Endothelial cell of umbilical vein (primary cell): ENCODE measurements at regions of chr1 and their contacts with region 1.

Region 1: DNA sequence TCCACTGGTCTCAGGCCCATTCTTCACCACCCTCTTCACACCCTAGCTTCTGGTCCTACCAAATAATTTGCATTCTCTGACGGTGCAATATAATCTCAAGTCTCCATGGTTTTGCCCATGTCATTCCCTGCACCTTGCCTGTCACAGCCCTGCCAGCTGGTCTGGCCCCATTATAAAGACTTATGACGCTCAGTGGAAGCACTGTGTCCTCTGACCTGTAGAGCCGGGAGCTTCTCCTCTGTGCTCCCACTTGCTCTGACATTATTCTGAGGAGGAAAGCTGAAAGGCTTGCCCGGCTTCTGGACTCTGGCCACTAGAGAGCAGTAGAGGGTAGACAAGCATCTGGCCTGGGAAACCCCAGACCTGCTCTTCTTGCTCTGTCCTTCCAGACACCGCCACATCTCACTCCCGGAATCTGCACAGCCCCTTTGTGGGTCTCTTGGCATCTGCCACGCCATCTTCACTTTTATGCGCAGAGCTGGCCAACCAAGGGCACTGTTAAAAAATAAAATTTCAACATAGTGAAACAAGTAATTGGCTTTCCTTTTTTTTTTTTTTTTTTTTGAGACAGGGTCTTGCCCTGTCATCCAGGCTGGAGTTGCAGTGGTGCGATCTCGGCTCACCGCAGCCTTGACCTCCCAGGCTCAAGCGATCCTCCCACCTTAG is 44.4 kb downstream of the NENF start:
- DNase-seq: peak; percentile 83
- H3K4me3 ChIP-seq: no peak overlapping the region
- H3K27ac ChIP-seq: no peak overlapping the region
- H3K4me1 ChIP-seq: peaks cover 13% of the 10 kb centered on the region
- H3K27me3 ChIP-seq: peaks cover 0 to 8% of the 10 kb centered on the region in 2 experiments
- CTCF ChIP-seq: peak; percentile 86 to 93
- POLR2A ChIP-seq: no peak

Region 2: DNA sequence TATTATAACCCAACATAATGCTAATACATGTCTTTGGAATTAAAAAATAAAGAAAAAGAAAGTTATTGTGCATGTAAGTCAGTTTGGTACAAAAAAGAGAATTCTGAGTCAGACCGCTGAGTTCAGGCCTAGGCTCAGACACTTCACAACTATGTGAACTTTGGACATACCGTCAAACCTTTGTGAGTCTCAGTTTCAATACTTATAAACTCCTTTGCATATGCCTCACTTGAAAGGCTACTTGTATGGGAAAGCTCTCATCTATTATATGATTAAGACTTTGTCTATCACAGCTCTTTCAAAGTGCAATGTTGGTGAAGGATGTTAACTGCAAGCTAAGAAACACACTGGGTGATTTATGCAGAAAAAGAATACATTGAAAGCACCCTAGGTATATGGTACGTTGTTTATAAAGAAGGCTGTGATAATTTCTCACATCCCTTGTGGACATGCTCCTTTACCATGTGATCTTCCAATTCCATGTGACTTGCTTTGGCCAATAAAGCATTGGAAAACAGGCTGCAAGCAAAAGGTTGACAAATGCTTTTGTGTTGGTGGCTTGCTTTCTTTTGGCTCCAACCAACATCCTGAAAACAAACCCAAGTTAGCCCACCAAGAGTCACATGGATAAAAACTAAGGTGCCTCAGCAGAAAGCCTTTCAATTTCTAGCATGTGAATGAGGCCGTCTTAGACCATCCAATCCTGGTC is 491.4 kb before region 1 on chr1:
- CTCF ChIA-PET with region 1: no interaction called
- POLR2A ChIA-PET with region 1: no interaction called
- dilution Hi-C with region 1: no loop called
- intact Hi-C with region 1: no loop called
- DNase-seq: no peak
- H3K4me3 ChIP-seq: no peak overlapping the region
- H3K27ac ChIP-seq: no peak overlapping the region
- H3K4me1 ChIP-seq: no peaks in the 10 kb centered on the region
- H3K27me3 ChIP-seq: no peaks in the 10 kb centered on the region
- CTCF ChIP-seq: no peak
- POLR2A ChIP-seq: no peak

Region 3: GRCh38 chr1:212271823-212272485 is 205.2 kb before region 1 on chr1:
- CTCF ChIA-PET with region 1: no interaction called
- POLR2A ChIA-PET with region 1: no interaction called
- dilution Hi-C with region 1: no loop called
- intact Hi-C with region 1: no loop called
- DNase-seq: no peak
- H3K4me3 ChIP-seq: no peak overlapping the region
- H3K27ac ChIP-seq: no peak overlapping the region
- H3K4me1 ChIP-seq: no peaks in the 10 kb centered on the region
- H3K27me3 ChIP-seq: peaks cover 24 to 30% of the 10 kb centered on the region in 2 experiments
- CTCF ChIP-seq: no peak
- POLR2A ChIP-seq: no peak

Region 4: GRCh38 chr1:212488397-212489283 is 11.5 kb after region 1 on chr1:
- CTCF ChIA-PET with region 1: interaction called, 20 read pairs
- POLR2A ChIA-PET with region 1: no interaction called
- dilution Hi-C with region 1: no loop called
- intact Hi-C with region 1: no loop called
- DNase-seq: no peak
- H3K4me3 ChIP-seq: no peak overlapping the region
- H3K27ac ChIP-seq: no peak overlapping the region
- H3K4me1 ChIP-seq: no peaks in the 10 kb centered on the region
- H3K27me3 ChIP-seq: peaks cover 0 to 2% of the 10 kb centered on the region in 2 experiments
- CTCF ChIP-seq: no peak
- POLR2A ChIP-seq: no peak

Region 5: DNA sequence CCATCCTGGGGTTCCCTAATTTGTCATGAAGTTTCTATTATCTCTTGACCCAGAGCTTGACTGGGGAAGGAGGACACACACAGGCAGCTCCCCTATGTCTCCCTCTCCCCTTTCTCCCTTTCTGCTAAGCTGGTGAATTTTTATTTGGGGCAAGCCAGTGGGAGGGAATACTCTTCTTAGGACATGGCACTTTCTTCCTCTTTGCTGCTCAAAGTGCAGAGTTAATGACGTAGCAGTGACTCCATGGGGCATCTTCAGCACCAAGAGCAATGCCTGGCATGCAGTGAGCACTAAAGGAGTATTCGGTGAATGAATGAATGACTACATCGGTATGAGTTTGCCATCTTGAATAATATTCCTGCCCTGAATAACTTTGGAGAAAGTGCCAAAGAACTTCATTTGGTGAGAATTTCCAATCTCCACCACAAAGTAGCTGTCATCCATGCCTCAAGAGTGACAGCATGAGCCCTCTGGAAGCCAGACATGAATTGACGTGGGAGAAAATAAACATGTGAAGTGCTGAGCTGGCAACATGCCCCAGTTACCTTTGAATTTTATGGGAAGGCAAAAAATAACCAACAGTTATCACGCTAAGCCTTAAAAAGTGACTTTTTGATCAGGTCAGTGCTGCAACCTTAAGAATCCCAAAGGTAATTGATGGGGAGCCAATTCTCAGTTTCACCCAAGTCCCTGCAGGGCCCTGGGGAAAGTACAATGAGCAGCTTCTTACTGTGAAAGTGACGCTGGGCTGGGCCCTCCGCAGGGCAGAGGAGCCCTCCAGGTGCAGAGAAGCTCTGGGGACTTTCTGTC is 109.3 kb after region 1 on chr1:
- CTCF ChIA-PET with region 1: interaction called, 11 read pairs
- POLR2A ChIA-PET with region 1: interaction called, 4 read pairs
- dilution Hi-C with region 1: no loop called
- intact Hi-C with region 1: no loop called
- DNase-seq: no peak
- H3K4me3 ChIP-seq: no peak overlapping the region
- H3K27ac ChIP-seq: no peak overlapping the region
- H3K4me1 ChIP-seq: no peaks in the 10 kb centered on the region
- H3K27me3 ChIP-seq: peaks cover 28 to 50% of the 10 kb centered on the region in 2 experiments
- CTCF ChIP-seq: no peak
- POLR2A ChIP-seq: no peak

Region 6: GRCh38 chr1:212621951-212622305 is 144.8 kb after region 1 on chr1:
- CTCF ChIA-PET with region 1: interaction called, 13 read pairs
- POLR2A ChIA-PET with region 1: no interaction called
- dilution Hi-C with region 1: no loop called
- intact Hi-C with region 1: no loop called
- DNase-seq: no peak
- H3K4me3 ChIP-seq: no peak overlapping the region
- H3K27ac ChIP-seq: no peak overlapping the region
- H3K4me1 ChIP-seq: peaks cover 13% of the 10 kb centered on the region
- H3K27me3 ChIP-seq: peaks cover 0 to 8% of the 10 kb centered on the region in 2 experiments
- CTCF ChIP-seq: no peak
- POLR2A ChIP-seq: no peak

Region 7: DNA sequence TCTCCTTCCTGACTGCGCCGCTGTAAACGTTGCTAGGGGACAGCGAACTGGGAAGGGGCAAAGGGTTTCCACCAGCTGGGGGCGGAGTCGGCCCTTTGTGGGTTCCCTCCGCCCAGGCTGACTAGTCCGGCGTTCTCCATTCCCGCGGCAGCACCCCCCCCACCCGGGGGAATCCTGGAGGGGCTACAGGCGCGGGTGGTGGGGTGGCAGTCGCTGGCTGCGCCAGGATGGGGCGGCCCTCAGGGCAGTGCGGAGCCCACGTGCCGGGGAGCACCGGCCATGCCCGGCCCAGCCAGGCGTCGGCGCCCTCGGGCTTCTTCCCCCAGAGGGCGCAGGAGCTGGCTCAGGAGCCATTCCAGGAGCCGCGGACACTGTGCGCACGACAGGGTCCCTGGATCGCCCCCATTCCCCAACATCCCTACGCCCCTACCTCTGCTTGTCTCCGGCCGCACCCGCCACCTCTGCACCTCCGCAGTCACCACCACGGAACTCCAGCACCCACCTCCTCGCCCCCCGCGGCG is 222.0 kb after region 1 on chr1:
- CTCF ChIA-PET with region 1: interaction called, 21 read pairs
- POLR2A ChIA-PET with region 1: no interaction called
- dilution Hi-C with region 1: no loop called
- intact Hi-C with region 1: loop called (anchors 1 kb)
- DNase-seq: peak; percentile 18
- H3K4me3 ChIP-seq: peak overlapping the region in 1 of 3 experiments; percentile 38
- H3K27ac ChIP-seq: no peak overlapping the region
- H3K4me1 ChIP-seq: peaks cover 16% of the 10 kb centered on the region
- H3K27me3 ChIP-seq: peaks cover 37 to 62% of the 10 kb centered on the region in 2 experiments
- CTCF ChIP-seq: peak; percentile 33 to 75
- POLR2A ChIP-seq: no peak

Region 8: DNA sequence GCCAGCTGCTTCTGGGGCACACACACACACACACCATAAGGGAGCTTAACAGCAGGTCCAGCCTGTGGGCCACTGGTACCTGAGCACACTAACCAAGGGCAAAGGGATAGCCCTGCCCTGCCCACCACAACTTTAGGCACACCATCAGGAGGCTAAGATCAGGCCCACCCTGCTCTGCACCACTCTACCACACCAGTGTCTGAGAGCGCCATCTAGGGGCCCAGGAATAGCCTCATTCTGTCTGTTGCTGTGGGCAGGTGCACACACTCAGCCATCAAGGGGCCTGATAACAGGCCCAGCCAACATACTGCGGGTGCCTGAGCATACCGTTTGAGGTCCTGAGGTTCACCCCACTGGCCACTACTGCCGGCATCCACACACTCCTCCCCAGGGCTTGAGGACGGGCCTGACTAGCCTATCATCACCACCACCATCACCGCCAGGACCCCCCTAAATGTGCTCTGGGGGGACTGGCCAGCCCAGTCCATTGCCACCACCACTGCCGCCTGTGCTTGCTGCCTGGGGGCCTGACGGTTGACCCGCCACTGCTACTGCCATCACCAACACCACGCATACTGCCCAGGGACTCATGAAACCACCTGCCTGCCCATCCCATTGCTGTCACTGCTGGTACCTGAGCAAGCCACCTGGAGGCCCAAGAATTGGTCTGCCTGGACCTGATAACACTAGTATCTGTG is 283.1 kb after region 1 on chr1:
- CTCF ChIA-PET with region 1: interaction called, 5 read pairs
- POLR2A ChIA-PET with region 1: no interaction called
- dilution Hi-C with region 1: no loop called
- intact Hi-C with region 1: loop called (anchors 1 kb)
- DNase-seq: no peak
- H3K4me3 ChIP-seq: no peak overlapping the region
- H3K27ac ChIP-seq: no peak overlapping the region
- H3K4me1 ChIP-seq: no peaks in the 10 kb centered on the region
- H3K27me3 ChIP-seq: no peaks in the 10 kb centered on the region
- CTCF ChIP-seq: peak; percentile 39 to 58
- POLR2A ChIP-seq: no peak

Region 9: GRCh38 chr1:213051127-213051880 is 574.2 kb after region 1 on chr1 and contains the start of gene RPS6KC1:
- CTCF ChIA-PET with region 1: no interaction called
- POLR2A ChIA-PET with region 1: no interaction called
- dilution Hi-C with region 1: no loop called
- intact Hi-C with region 1: loop called (anchors 1 kb)
- DNase-seq: peak; percentile 74
- H3K4me3 ChIP-seq: peak within 1 kb of the TSS; percentile 83 to 95 (median 84)
- H3K27ac ChIP-seq: peak within 1 kb of the TSS; percentile 35
- H3K4me1 ChIP-seq: peaks cover 6% of the 10 kb centered on the region
- H3K27me3 ChIP-seq: peaks cover 0 to under 1% of the 10 kb centered on the region in 2 experiments
- CTCF ChIP-seq: no peak
- POLR2A ChIP-seq: peak; percentile 54
- total RNA-seq, gene RPS6KC1: 14.9 and 18.6 TPM in 2 replicates